Tibial artery (tissue), 4 donors: ENCODE measurements at regions of chr1 and their contacts with region 1.

Region 1: GRCh38 chr1:9196129-9197040 is 38.2 kb upstream of the H6PD start:
- DNase-seq: peak; percentile 74 to 81
- H3K4me3 ChIP-seq: peak overlapping the region in 1 of 2 donors; percentile 17
- H3K27ac ChIP-seq: no peak overlapping the region
- H3K4me1 ChIP-seq: peaks cover 0 to 41% (median 27%) of the 10 kb centered on the region in 4 donors
- H3K27me3 ChIP-seq: no peaks in the 10 kb centered on the region
- CTCF ChIP-seq: peak; percentile 81 to 86

Region 2: GRCh38 chr1:9110669-9111356 is 85.6 kb before region 1 on chr1:
- intact Hi-C with region 1: loop called (anchors 2 kb)
- DNase-seq: peak; percentile 88 to 91
- H3K4me3 ChIP-seq: no peak overlapping the region
- H3K27ac ChIP-seq: no peak overlapping the region
- H3K4me1 ChIP-seq: peaks cover 0 to 6% (median 0%) of the 10 kb centered on the region in 4 donors
- H3K27me3 ChIP-seq: no peaks in the 10 kb centered on the region
- CTCF ChIP-seq: peak; percentile 86 to 89

Region 3: GRCh38 chr1:9145021-9145668 is 51.2 kb before region 1 on chr1:
- intact Hi-C with region 1: loop called (anchors 2 kb)
- DNase-seq: no peak
- H3K4me3 ChIP-seq: no peak overlapping the region
- H3K27ac ChIP-seq: no peak overlapping the region
- H3K4me1 ChIP-seq: peaks cover 0 to 12% (median 8%) of the 10 kb centered on the region in 4 donors
- H3K27me3 ChIP-seq: no peaks in the 10 kb centered on the region
- CTCF ChIP-seq: no peak

Region 4: DNA sequence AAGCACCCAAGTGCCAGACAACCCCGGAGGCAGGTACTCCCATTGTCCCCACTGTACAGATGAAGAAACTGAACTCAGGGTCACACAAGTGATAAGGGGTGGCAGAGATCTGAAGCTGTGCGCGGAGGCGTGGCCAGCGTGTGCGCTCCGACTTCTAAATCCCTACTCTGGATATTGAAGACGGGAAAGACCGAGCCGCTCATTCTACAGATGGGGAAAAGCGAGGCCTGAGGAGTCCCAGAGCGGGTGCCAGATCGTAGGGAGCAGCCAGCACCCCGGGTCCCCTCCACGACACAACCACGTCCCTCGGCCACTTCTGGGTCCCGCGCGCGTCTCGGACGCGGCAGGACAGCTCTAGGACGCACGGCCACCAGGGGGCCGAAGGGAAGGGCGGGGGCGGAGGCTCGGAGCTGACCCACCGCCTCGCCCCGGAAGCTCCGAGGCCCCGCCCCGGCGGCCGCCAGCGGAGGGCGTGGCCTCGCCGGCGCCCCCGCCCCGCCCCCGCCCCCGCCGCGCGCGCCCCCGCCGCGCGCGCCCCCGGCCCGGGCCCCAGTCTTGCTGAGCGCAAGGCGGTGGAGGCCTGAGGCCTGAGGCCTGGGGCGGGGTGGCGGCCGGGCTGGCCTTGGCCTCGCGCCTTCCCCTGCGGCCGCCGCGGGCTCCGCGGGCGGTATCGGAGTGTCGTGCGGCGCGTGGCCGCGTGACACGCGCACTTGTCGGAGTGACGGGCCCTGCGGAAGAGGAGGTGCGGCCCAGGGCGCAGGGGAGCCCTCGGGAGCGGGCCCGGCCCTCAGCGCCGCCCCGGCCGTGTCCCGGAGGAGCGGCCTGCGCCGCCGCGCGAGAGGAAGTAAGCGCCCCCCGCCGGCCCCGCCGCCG is 38.1 kb after region 1 on chr1 and contains the start of gene H6PD:
- intact Hi-C with region 1: loop called (anchors 5 kb)
- DNase-seq: peak; percentile 85 to 92
- H3K4me3 ChIP-seq: peak within 1 kb of the TSS; percentile 66 to 67
- H3K27ac ChIP-seq: peak within 1 kb of the TSS; percentile 95
- H3K4me1 ChIP-seq: peaks cover 0 to 72% (median 54%) of the 10 kb centered on the region in 4 donors
- H3K27me3 ChIP-seq: no peaks in the 10 kb centered on the region
- CTCF ChIP-seq: peak; percentile 68 to 93

Region 5: GRCh38 chr1:9280015-9280860 is 83.9 kb after region 1 on chr1:
- intact Hi-C with region 1: no loop called
- DNase-seq: peak; percentile 76 to 86
- H3K4me3 ChIP-seq: no peak overlapping the region
- H3K27ac ChIP-seq: no peak overlapping the region
- H3K4me1 ChIP-seq: peaks cover 0 to 46% (median 19%) of the 10 kb centered on the region in 4 donors
- H3K27me3 ChIP-seq: peaks cover 0 to 8% of the 10 kb centered on the region in 2 donors
- CTCF ChIP-seq: no peak